PC-9 (cell line): ENCODE measurements at regions of chr5 and their contacts with region 1.

Region 1: GRCh38 chr5:131322926-131323325 is 59.1 kb downstream of the CDC42SE2 start:
- DNase-seq: peak; percentile 46 to 63
- H3K4me3 ChIP-seq: no peak overlapping the region
- H3K27ac ChIP-seq: no peak overlapping the region; the same call in 1 of the 2 replicates
- H3K4me1 ChIP-seq: peaks cover 3% of the 10 kb centered on the region
- H3K27me3 ChIP-seq: no peaks in the 10 kb centered on the region
- CTCF ChIP-seq: no peak

Region 2: DNA sequence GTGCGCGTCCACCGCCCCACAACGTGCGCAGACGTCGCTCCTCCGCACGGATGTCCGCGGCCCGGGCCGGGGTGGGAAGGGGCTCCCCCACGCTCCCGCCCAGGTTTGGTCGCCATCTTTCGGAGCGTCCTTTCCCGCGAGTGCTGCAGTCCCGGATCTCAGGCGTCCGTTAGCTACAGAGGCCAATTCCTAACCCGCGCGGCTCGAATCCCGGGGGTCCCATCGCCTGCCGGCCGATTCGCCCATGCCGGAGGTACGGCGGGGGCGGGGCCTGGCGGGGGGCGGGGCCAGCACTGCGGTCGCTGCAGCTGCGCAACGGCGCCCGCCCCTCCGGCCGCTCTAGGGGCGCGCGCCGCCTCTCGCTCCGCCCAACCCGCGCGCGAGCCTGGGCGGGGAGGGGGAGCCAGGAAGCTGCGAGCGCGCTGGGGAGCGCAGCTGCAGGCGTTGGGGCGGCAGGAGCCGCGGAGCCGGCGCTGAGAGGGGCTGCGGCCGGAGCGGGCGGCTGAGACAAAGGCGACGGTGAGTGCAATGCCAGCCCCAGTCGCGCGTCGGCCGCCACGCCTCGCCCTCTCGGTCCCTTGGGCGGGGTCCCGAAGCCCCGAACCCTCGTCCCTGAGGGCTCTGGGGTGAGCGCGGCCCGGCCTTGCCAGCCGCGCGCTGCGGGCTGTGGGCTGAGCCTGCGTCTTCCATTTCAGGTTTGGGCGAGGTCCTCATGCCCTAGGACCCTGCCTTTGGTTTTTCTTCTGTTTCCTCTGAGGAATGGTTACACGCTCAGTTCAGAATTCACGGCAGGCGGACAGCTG is 59.1 kb before region 1 on chr5 and contains the start of gene CDC42SE2:
- CTCF ChIA-PET with region 1: no interaction called
- POLR2A ChIA-PET with region 1: interaction called, 3 read pairs
- intact Hi-C with region 1: loop called (anchors 2 kb)
- DNase-seq: peak; percentile 59 to 86
- H3K4me3 ChIP-seq: peak within 1 kb of the TSS; percentile 86
- H3K27ac ChIP-seq: peak within 1 kb of the TSS; percentile 61
- H3K4me1 ChIP-seq: peaks cover 31% of the 10 kb centered on the region
- H3K27me3 ChIP-seq: no peaks in the 10 kb centered on the region
- CTCF ChIP-seq: no peak
- total RNA-seq, gene CDC42SE2: 27.3 and 32.8 TPM in 2 replicates

Region 3: GRCh38 chr5:131305906-131306305 is 17.0 kb before region 1 on chr5:
- CTCF ChIA-PET with region 1: no interaction called
- POLR2A ChIA-PET with region 1: no interaction called
- intact Hi-C with region 1: no loop called
- DNase-seq: no peak
- H3K4me3 ChIP-seq: no peak overlapping the region
- H3K27ac ChIP-seq: no peak overlapping the region
- H3K4me1 ChIP-seq: peaks cover 17% of the 10 kb centered on the region
- H3K27me3 ChIP-seq: no peaks in the 10 kb centered on the region
- CTCF ChIP-seq: no peak